Activated B cell treated with CpG ODN at 0.5 μM for 24 hours (primary cell): ENCODE measurements at regions of chr17 and their contacts with region 1.

Region 1: DNA sequence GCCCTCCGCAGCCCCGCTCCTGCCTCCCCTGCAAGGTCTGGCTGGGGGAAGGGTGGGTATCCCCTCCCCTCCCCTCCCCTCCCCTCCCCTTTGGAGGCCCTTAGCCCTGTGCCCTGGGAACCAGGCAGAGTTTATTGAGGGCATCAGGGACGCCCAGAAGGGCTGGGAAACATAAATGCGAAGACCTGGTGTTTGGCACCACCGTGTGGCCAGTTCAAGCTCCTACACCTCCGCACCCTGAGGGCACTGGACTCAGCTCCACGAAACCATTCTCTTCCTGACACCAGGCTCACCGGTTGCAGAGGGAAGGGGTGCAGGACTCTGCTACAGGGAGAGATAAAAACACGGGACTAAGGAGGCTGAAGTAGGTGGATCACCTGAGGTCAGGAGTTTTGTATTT is 1.0 kb upstream of the AIPL1 start:
- DNase-seq: peak; percentile 39
- ATAC-seq: peak; percentile 95
- H3K4me3 Mint-ChIP-seq: no peak overlapping the region
- H3K27ac Mint-ChIP-seq: no peak overlapping the region
- H3K4me1 Mint-ChIP-seq: peaks cover 2% of the 10 kb centered on the region
- H3K27me3 Mint-ChIP-seq: peaks cover 36% of the 10 kb centered on the region
- CTCF ChIP-seq: no peak

Region 2: GRCh38 chr17:5584383-5585286 is 851.3 kb before region 1 on chr17 and contains the start of gene NLRP1:
- CTCF ChIA-PET with region 1: interaction called, 20 read pairs
- POLR2A ChIA-PET with region 1: no interaction called
- intact Hi-C with region 1: loop called (anchors 1 kb)
- DNase-seq: peak; percentile 78
- ATAC-seq: peak; percentile 96
- H3K4me3 Mint-ChIP-seq: peak within 1 kb of the TSS; percentile 92
- H3K27ac Mint-ChIP-seq: peak within 1 kb of the TSS; percentile 93
- H3K4me1 Mint-ChIP-seq: peaks cover 66% of the 10 kb centered on the region
- H3K27me3 Mint-ChIP-seq: no peaks in the 10 kb centered on the region
- CTCF ChIP-seq: no peak
- total RNA-seq, gene NLRP1: 35.5 and 40.4 TPM in 2 replicates

Region 3: GRCh38 chr17:5592382-5592781 is 843.6 kb before region 1 on chr17:
- CTCF ChIA-PET with region 1: interaction called, 28 read pairs
- POLR2A ChIA-PET with region 1: no interaction called
- intact Hi-C with region 1: loop called (anchors 1 kb)
- DNase-seq: no peak
- ATAC-seq: no peak
- H3K4me3 Mint-ChIP-seq: no peak overlapping the region
- H3K27ac Mint-ChIP-seq: no peak overlapping the region
- H3K4me1 Mint-ChIP-seq: peaks cover 1% of the 10 kb centered on the region
- H3K27me3 Mint-ChIP-seq: peaks cover 30% of the 10 kb centered on the region
- CTCF ChIP-seq: no peak

Region 4: DNA sequence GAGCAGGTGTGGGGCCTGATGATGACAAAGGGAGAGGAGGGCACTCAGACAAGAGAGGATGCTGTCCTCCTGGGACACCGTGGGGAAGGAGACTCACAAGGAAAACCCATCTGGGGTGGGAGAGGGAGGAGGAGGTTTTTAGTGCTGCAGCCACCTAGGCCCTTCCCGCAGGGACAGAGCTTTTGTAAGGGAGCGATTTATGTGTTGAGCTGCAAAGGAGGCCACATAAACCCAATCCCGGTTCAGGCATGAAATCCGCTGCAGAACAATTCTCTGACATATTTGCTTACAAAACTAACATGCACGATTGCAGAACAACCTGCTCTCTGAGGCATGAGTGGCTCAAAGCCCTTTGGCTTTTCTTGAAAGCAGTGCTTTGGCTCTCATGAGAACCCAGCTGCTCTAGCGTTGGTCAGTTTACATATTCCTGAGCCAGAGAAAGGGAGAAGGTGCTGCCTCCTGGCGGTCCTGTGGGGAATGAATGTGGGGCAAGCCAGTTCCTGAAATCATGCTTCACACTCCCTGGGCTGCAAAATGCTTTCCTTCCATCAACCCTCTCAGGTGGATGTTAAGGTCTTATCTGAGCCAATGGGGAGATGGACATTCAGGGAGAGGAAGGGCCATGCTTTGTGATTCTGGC is 729.3 kb before region 1 on chr17:
- CTCF ChIA-PET with region 1: no interaction called
- POLR2A ChIA-PET with region 1: no interaction called
- intact Hi-C with region 1: loop called (anchors 5 kb)
- DNase-seq: peak; percentile 42
- ATAC-seq: no peak
- H3K4me3 Mint-ChIP-seq: no peak overlapping the region
- H3K27ac Mint-ChIP-seq: no peak overlapping the region
- H3K4me1 Mint-ChIP-seq: no peaks in the 10 kb centered on the region
- H3K27me3 Mint-ChIP-seq: peaks cover 25% of the 10 kb centered on the region
- CTCF ChIP-seq: no peak

Region 5: DNA sequence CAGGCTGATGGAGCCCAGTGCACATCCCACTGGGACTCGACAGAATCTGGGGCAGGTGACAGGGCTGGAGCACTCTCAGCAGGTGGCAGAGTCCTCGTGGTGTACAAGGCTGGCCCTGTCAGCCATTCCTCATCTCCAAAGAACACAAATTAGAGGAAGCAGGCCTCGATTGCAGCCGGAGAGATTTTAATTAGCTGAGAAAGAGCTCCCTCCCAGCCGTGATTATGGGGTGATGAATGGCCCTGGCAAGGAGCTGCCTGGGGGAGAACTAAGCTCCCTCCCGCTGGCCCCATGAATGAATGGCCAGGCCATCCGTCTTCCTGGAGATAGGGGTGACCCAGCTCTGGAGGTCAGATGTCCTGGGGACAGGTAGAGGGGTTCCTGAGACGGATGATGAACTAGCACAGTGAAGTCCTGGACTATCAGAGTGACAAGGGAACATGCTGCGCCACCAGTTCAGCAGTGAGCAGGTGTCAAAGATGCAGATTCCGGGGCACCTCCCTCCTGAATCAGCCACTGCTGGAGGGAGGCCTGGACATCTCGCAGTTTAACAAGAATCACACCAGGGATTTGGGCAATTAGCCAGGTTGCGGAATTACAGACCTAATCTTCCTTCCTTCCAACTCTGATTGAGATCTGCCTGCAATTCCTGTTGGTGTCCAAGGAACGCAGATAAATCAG is 43.8 kb after region 1 on chr17:
- CTCF ChIA-PET with region 1: no interaction called
- POLR2A ChIA-PET with region 1: no interaction called
- intact Hi-C with region 1: no loop called
- DNase-seq: no peak
- ATAC-seq: no peak
- H3K4me3 Mint-ChIP-seq: no peak overlapping the region
- H3K27ac Mint-ChIP-seq: no peak overlapping the region
- H3K4me1 Mint-ChIP-seq: no peaks in the 10 kb centered on the region
- H3K27me3 Mint-ChIP-seq: peaks cover 5% of the 10 kb centered on the region
- CTCF ChIP-seq: no peak

Region 6: GRCh38 chr17:6567529-6568183 is 131.7 kb after region 1 on chr17:
- CTCF ChIA-PET with region 1: no interaction called
- POLR2A ChIA-PET with region 1: interaction called, 11 read pairs
- intact Hi-C with region 1: no loop called
- DNase-seq: no peak
- ATAC-seq: no peak
- H3K4me3 Mint-ChIP-seq: no peak overlapping the region
- H3K27ac Mint-ChIP-seq: no peak overlapping the region
- H3K4me1 Mint-ChIP-seq: no peaks in the 10 kb centered on the region
- H3K27me3 Mint-ChIP-seq: peaks cover 13% of the 10 kb centered on the region
- CTCF ChIP-seq: no peak

Region 7: GRCh38 chr17:7137171-7137943 is 701.4 kb after region 1 on chr17:
- CTCF ChIA-PET with region 1: no interaction called
- POLR2A ChIA-PET with region 1: no interaction called
- intact Hi-C with region 1: no loop called
- DNase-seq: no peak
- ATAC-seq: no peak
- H3K4me3 Mint-ChIP-seq: no peak overlapping the region
- H3K27ac Mint-ChIP-seq: no peak overlapping the region
- H3K4me1 Mint-ChIP-seq: peaks cover 18% of the 10 kb centered on the region
- H3K27me3 Mint-ChIP-seq: peaks cover 9% of the 10 kb centered on the region
- CTCF ChIP-seq: no peak